CD8-positive, alpha-beta memory T cell (primary cell): ENCODE measurements at regions of chr5 and their contacts with region 1.

Region 1: DNA sequence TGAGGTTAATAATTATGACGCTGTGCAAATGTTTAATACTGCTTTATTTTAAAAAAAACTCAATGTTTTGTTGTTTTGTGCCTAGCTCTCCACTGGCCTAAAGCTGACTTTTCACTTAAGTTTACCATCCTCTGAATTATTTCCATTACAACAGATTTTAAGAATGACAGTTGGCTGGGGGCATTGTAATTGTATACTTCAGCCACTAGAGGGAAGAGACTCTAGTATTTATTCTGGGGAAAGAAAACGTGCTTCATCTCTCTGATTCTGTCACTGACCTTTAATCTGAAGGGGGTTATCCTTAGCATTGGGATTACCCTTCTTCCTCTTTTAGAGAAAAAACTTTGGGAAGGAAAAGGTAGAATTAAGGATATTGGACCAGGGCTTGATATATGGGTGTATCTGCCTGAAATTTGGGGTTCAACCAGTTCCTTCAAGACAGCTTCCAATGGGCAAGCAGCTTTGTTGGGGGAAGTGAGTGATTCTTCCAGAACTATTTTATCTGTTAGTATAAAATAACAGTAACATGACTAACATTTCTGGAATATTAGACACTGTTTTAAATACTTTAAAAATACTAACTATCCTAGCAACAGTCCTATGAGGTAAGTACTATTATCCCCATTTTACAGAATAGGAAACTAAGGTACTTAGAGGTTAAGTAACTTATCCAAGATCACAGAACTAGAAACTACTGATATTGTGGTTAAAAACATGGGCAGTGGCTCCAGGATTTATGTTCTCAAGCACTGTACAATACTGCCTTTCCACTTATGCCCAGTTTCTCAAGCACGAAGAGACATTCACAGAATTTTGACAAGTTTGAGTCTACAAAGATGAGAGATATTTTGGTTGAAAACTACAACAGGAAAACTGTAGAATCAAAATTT is 208.4 kb downstream of the CD180 start:
- DNase-seq: peak in 2 of 5 donors; percentile 28 to 30
- H3K4me3 ChIP-seq: no peak overlapping the region
- H3K4me3 Mint-ChIP-seq: no peak overlapping the region
- H3K27ac ChIP-seq: no peak overlapping the region
- H3K27ac Mint-ChIP-seq: peak overlapping the region in 1 of 8 donors; percentile 21
- H3K4me1 ChIP-seq: no peaks in the 10 kb centered on the region
- H3K4me1 Mint-ChIP-seq: peaks cover 0 to 5% (median 0%) of the 10 kb centered on the region in 3 donors
- H3K27me3 ChIP-seq: no peaks in the 10 kb centered on the region
- H3K27me3 Mint-ChIP-seq: peaks cover 0 to 4% of the 10 kb centered on the region in 2 donors

Region 2: DNA sequence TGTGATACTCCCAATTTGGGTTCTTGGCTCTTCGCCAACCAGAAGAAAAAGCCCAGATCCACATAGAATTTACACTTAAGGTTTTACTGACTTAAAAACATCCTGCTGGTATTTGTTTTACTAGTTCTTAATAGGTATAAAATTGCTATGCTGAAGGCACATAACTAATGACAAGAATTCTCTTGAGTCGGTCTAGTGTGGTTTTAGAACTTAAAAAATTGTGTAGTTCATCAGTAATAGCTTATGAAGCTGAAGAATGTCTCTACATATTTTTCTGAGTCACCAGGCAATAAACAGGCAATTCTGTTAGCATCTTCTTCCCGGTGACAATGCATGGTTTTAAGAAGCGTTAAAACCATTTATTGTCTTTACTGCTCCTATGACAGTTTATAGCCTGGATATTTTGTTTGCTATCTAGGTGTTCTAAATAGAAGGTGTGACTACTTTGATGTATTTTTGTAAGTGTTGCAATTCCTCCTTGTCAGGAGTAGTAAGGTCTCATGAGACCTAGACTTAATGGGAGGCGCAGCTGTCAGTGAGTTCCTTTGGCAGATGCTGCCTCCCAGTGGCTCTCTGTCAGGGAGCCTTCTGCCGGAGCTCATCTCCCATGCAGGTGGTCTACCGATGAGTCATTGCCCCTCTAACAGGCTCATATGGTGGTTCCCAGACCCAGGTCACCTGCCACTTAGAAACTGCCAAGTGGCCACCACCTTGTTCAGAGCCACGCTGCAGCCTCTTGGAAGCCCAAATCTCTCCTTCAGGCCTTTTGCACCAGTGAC is 218.2 kb before region 1 on chr5:
- CTCF ChIA-PET with region 1: no interaction called
- POLR2A ChIA-PET with region 1: no interaction called
- DNase-seq: no peak
- H3K4me3 ChIP-seq: no peak overlapping the region
- H3K4me3 Mint-ChIP-seq: no peak overlapping the region
- H3K27ac ChIP-seq: no peak overlapping the region
- H3K27ac Mint-ChIP-seq: no peak overlapping the region
- H3K4me1 ChIP-seq: no peaks in the 10 kb centered on the region
- H3K4me1 Mint-ChIP-seq: no peaks in the 10 kb centered on the region
- H3K27me3 ChIP-seq: no peaks in the 10 kb centered on the region
- H3K27me3 Mint-ChIP-seq: peaks cover 3 to 5% of the 10 kb centered on the region in 2 donors

Region 3: DNA sequence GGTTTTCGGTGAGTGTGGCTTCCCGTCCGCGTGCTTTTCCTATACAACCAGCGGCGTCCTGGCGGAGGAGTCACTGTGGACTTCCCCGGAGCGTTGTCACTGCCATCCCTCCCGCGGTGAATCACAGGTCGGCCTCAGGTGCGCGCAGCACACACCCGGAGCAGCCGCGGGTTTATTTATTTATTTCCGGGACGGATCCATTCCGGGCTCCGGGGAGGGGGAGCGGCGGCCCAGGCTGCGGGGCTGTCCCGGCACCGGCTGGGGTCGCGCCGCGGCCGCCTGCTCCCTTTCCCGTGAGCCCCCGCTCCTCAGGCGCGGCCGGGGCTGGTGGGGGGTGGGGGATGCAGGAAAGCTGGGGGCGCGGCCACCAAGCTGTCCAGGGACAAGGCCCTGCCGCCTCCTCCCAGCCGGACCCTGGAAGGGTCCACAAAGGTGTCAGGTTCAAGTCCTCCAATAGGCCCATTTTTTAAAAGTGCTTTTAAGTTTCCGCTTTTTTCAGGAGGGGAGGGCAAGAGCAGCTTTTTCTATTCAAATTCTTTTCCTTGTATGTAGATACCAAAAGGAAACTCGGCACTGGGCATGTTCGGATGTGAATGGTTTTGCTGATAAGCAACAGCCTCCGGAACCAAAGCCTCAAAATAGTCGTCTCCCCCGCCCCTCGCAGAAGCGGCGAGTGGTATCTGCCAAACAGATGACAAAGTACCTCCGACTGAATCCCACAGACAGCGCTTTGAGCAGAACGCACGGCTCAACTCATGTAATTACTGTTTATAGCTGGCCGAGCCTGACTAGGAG is 15.9 kb after region 1 on chr5:
- CTCF ChIA-PET with region 1: interaction called, 15 read pairs
- POLR2A ChIA-PET with region 1: interaction called, 3 read pairs
- DNase-seq: peak; percentile 75 to 92 (median 85)
- H3K4me3 ChIP-seq: peak overlapping the region; percentile 52
- H3K4me3 Mint-ChIP-seq: peak overlapping the region; percentile 87 to 96 (median 91)
- H3K27ac ChIP-seq: peak overlapping the region; percentile 54
- H3K27ac Mint-ChIP-seq: peak overlapping the region; percentile 83 to 98 (median 96)
- H3K4me1 ChIP-seq: peaks cover 18% of the 10 kb centered on the region
- H3K4me1 Mint-ChIP-seq: peaks cover 41 to 56% (median 52%) of the 10 kb centered on the region in 3 donors
- H3K27me3 ChIP-seq: no peaks in the 10 kb centered on the region
- H3K27me3 Mint-ChIP-seq: peaks cover 0 to 3% of the 10 kb centered on the region in 2 donors